ENCODE measurements at regions of chr17 and their contacts with region 1.

Region 1: GRCh38 chr17:48878918-48879898 is 13.4 kb upstream of the ATP5MC1 start:
- DNase-seq: peak; percentile 67 to 71 (median 70)
- H3K4me3 ChIP-seq: no peak overlapping the region
- H3K4me3 Mint-ChIP-seq: no peak overlapping the region
- H3K27ac ChIP-seq: no peak overlapping the region
- H3K27ac Mint-ChIP-seq: no peak overlapping the region
- H3K4me1 ChIP-seq: no peaks in the 10 kb centered on the region
- H3K4me1 Mint-ChIP-seq: peaks cover 0 to 7% (median 2%) of the 10 kb centered on the region in 4 donors
- H3K27me3 ChIP-seq: no peaks in the 10 kb centered on the region
- H3K27me3 Mint-ChIP-seq: peaks cover 0 to 7% of the 10 kb centered on the region in 2 donors

Region 2: GRCh38 chr17:48671697-48672171 is 207.5 kb before region 1 on chr17:
- CTCF ChIA-PET with region 1: interaction called, 159 read pairs
- POLR2A ChIA-PET with region 1: no interaction called
- intact Hi-C with region 1: loop called (anchors 1 kb)
- DNase-seq: peak; percentile 56 to 66 (median 60)
- H3K4me3 ChIP-seq: no peak overlapping the region
- H3K4me3 Mint-ChIP-seq: peak overlapping the region in 7 of 8 donors; percentile 17 to 78 (median 39)
- H3K27ac ChIP-seq: no peak overlapping the region
- H3K27ac Mint-ChIP-seq: no peak overlapping the region
- H3K4me1 ChIP-seq: no peaks in the 10 kb centered on the region
- H3K4me1 Mint-ChIP-seq: peaks cover 0 to 6% (median 3%) of the 10 kb centered on the region in 4 donors
- H3K27me3 ChIP-seq: no peaks in the 10 kb centered on the region
- H3K27me3 Mint-ChIP-seq: peaks cover 23 to 33% of the 10 kb centered on the region in 2 donors

Region 3: GRCh38 chr17:48724251-48725003 is 154.8 kb before region 1 on chr17:
- CTCF ChIA-PET with region 1: interaction called, 33 read pairs
- POLR2A ChIA-PET with region 1: interaction called, 3 read pairs
- intact Hi-C with region 1: loop called (anchors 1 kb)
- DNase-seq: peak; percentile 64 to 79 (median 66)
- H3K4me3 ChIP-seq: no peak overlapping the region
- H3K4me3 Mint-ChIP-seq: peak overlapping the region; percentile 59 to 84 (median 78)
- H3K27ac ChIP-seq: no peak overlapping the region
- H3K27ac Mint-ChIP-seq: peak overlapping the region in 3 of 7 donors; percentile 82 to 86 (median 85)
- H3K4me1 ChIP-seq: peaks cover 40% of the 10 kb centered on the region
- H3K4me1 Mint-ChIP-seq: peaks cover 22 to 81% (median 33%) of the 10 kb centered on the region in 4 donors
- H3K27me3 ChIP-seq: peaks cover 96% of the 10 kb centered on the region
- H3K27me3 Mint-ChIP-seq: peaks cover 79 to 83% of the 10 kb centered on the region in 2 donors

Region 4: GRCh38 chr17:48816774-48817590 is 62.2 kb before region 1 on chr17 and contains the start of gene TTLL6:
- CTCF ChIA-PET with region 1: interaction called, 463 read pairs
- POLR2A ChIA-PET with region 1: interaction called, 4 read pairs
- intact Hi-C with region 1: loop called (anchors 1 kb)
- DNase-seq: peak; percentile 78 to 93 (median 81)
- H3K4me3 ChIP-seq: peak within 1 kb of the TSS; percentile 19 to 26
- H3K4me3 Mint-ChIP-seq: peak within 1 kb of the TSS; percentile 75 to 96 (median 88)
- H3K27ac ChIP-seq: no peak within 1 kb of the TSS
- H3K27ac Mint-ChIP-seq: peak within 1 kb of the TSS; percentile 14 to 79 (median 47)
- H3K4me1 ChIP-seq: peaks cover 20% of the 10 kb centered on the region
- H3K4me1 Mint-ChIP-seq: peaks cover 8 to 24% (median 18%) of the 10 kb centered on the region in 4 donors
- H3K27me3 ChIP-seq: peaks cover 4% of the 10 kb centered on the region
- H3K27me3 Mint-ChIP-seq: peaks cover 14 to 20% of the 10 kb centered on the region in 2 donors
- total RNA-seq, gene TTLL6: not detected

Region 5: DNA sequence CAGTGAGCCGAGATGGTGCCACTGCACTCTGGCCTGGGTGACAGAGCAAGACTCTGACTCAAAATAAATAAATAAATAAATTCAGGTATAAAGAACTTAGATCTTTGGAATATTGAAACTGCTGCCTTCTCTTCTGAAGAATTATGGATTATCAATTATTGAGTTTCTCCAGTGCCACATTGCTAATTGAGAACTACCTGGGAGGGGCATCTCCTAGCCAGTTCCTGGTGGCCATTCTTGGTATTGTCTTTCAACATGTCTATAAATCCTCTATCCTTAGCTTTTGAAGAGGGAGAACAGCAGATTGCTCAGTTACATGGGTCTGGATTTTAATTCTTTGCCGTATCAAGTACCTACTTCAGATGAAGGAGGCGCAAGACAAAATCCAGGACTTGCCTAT is 19.2 kb before region 1 on chr17:
- CTCF ChIA-PET with region 1: interaction called, 15 read pairs
- POLR2A ChIA-PET with region 1: interaction called, 5 read pairs
- intact Hi-C with region 1: no loop called
- DNase-seq: no peak
- H3K4me3 ChIP-seq: no peak overlapping the region
- H3K4me3 Mint-ChIP-seq: no peak overlapping the region
- H3K27ac ChIP-seq: no peak overlapping the region
- H3K27ac Mint-ChIP-seq: no peak overlapping the region
- H3K4me1 ChIP-seq: no peaks in the 10 kb centered on the region
- H3K4me1 Mint-ChIP-seq: peaks cover 0 to 5% (median 3%) of the 10 kb centered on the region in 4 donors
- H3K27me3 ChIP-seq: no peaks in the 10 kb centered on the region
- H3K27me3 Mint-ChIP-seq: no peaks in the 10 kb centered on the region

Region 6: GRCh38 chr17:48892940-48893645 is 13.9 kb after region 1 on chr17:
- CTCF ChIA-PET with region 1: interaction called, 21 read pairs
- POLR2A ChIA-PET with region 1: no interaction called
- intact Hi-C with region 1: no loop called
- DNase-seq: peak in 1 of 5 donors; percentile 7
- H3K4me3 ChIP-seq: peak overlapping the region; percentile 80 to 93
- H3K4me3 Mint-ChIP-seq: peak overlapping the region; percentile 86 to 97 (median 93)
- H3K27ac ChIP-seq: peak overlapping the region; percentile 69
- H3K27ac Mint-ChIP-seq: peak overlapping the region; percentile 90 to 98 (median 97)
- H3K4me1 ChIP-seq: peaks cover 22% of the 10 kb centered on the region
- H3K4me1 Mint-ChIP-seq: peaks cover 12 to 27% (median 19%) of the 10 kb centered on the region in 4 donors
- H3K27me3 ChIP-seq: no peaks in the 10 kb centered on the region
- H3K27me3 Mint-ChIP-seq: no peaks in the 10 kb centered on the region

Measured in CD4-positive, alpha-beta memory T cell (primary cell).